Thyroid gland (tissue), 4 donors: ENCODE measurements at regions of chr13 and their contacts with region 1.

Region 1: GRCh38 chr13:41137951-41138350 is 5.3 kb upstream of the KBTBD6 start:
- DNase-seq: no peak
- H3K4me3 ChIP-seq: no peak overlapping the region
- H3K27ac ChIP-seq: no peak overlapping the region
- H3K4me1 ChIP-seq: peaks cover 0 to 5% of the 10 kb centered on the region in 2 donors
- H3K27me3 ChIP-seq: no peaks in the 10 kb centered on the region
- CTCF ChIP-seq: no peak
- POLR2A ChIP-seq: no peak

Region 2: DNA sequence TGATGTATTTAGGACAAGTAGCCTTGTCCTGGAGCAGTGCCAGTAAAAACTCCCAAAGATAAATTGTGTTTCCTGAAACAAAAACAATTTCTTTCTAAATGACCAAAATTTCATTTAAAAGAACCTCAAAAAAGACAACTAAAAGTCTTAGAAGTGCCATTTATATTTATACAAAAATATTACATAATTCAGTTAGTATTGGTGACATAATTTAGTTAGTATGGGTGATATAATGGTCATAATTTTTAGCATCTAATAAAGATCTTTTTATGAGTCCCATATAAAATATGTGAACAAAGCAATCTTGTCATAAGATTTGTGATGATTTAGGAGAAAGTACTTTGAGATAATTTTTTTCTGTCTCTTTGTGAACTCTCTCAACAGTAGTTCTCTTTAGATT is 194.9 kb before region 1 on chr13:
- intact Hi-C with region 1: no loop called
- DNase-seq: peak; percentile 35 to 37
- H3K4me3 ChIP-seq: no peak overlapping the region
- H3K27ac ChIP-seq: peak overlapping the region; percentile 57 to 74 (median 59)
- H3K4me1 ChIP-seq: peaks cover 10 to 12% of the 10 kb centered on the region in 2 donors
- H3K27me3 ChIP-seq: no peaks in the 10 kb centered on the region
- CTCF ChIP-seq: no peak
- POLR2A ChIP-seq: no peak

Region 3: DNA sequence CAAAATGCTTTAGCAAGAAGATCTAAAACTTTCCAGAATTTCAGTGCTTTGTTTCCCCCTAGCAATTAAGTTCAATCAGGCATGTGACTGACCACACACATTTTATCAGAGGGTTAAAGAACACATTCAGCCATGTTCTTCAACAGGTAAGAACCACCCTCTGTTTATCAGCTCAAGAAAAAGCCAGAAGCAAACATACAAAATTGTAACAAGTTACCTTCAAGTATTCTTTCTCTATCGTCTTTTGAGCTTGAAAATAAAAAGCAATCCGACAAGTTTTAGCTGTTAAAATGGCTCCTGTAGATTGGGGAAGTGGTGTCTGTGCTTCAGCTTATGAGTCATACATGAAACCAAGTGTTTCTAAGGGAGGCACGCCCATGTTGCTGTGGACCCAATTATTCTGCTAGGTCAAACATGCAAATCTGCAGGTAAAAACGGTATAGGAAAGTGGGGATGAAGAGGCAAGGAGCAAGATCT is 118.9 kb before region 1 on chr13 and contains the start of gene ELF1:
- intact Hi-C with region 1: no loop called
- DNase-seq: peak; percentile 66 to 70
- H3K4me3 ChIP-seq: peak within 1 kb of the TSS in 2 of 3 donors; percentile 14 to 25
- H3K27ac ChIP-seq: peak within 1 kb of the TSS; percentile 81 to 94 (median 85)
- H3K4me1 ChIP-seq: peaks cover 36 to 37% of the 10 kb centered on the region in 2 donors
- H3K27me3 ChIP-seq: no peaks in the 10 kb centered on the region
- CTCF ChIP-seq: no peak
- POLR2A ChIP-seq: peak in 1 of 2 donors; percentile 50
- total RNA-seq, gene ELF1: 105 to 119 (median 110) TPM

Region 4: GRCh38 chr13:41200126-41200525 is 62.2 kb after region 1 on chr13:
- intact Hi-C with region 1: loop called (anchors 5 kb)
- DNase-seq: no peak
- H3K4me3 ChIP-seq: no peak overlapping the region
- H3K27ac ChIP-seq: no peak overlapping the region
- H3K4me1 ChIP-seq: no peaks in the 10 kb centered on the region
- H3K27me3 ChIP-seq: no peaks in the 10 kb centered on the region
- CTCF ChIP-seq: no peak
- POLR2A ChIP-seq: no peak

Region 5: DNA sequence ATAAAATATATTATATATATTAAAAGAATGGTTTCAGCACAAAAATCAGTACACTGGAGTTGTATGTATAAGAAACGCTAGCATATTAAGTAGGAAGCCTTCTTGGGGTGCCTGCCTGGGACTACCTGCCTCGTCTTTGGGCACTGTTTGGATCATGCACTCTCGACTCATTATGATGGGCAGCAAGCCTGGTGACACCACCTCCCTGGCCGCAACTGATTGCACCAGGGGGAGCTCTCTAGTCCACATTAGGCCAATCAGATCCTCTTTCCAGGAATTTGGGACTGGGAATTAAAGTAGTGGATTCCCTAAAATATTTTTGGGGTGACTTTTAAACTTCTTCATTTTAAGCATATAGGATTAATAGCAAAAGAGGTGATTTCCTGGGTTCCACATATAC is 263.4 kb after region 1 on chr13:
- intact Hi-C with region 1: no loop called
- DNase-seq: no peak
- H3K4me3 ChIP-seq: no peak overlapping the region
- H3K27ac ChIP-seq: no peak overlapping the region
- H3K4me1 ChIP-seq: no peaks in the 10 kb centered on the region
- H3K27me3 ChIP-seq: no peaks in the 10 kb centered on the region
- CTCF ChIP-seq: no peak
- POLR2A ChIP-seq: no peak